Pancreas (tissue), 10 donors: ENCODE measurements at regions of chr16 and their contacts with region 1.

Region 1: DNA sequence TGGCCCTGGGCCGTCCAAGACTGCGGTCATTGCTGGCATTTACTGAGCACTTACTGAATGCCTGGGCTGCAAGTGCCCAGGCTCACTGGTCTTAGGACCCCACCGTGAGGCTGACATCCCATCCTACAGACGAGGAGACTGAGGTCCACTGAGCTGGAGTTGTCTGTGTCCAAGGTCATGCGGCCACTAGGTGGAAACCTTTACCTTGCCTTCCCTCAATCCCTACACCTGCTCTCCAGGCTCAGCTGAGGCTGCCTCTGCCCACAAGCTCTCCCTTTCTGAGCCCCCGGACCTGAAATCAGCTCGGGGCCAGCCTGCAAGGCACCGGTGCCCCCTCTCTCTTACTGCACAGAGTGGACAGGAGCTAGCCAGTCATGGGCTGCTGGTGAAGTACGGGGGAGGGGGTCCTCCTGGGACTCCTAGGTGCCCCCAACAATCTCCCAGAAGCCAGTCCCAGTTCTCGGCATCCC is 1.5 kb downstream of the CASKIN1 start:
- DNase-seq: peak in 3 of 6 donors; percentile 53 to 68 (median 67)
- ATAC-seq: peak; percentile 79 to 94 (median 90)
- H3K4me3 ChIP-seq: no peak overlapping the region
- H3K27ac ChIP-seq: no peak overlapping the region
- H3K4me1 ChIP-seq: peaks cover 5 to 7% (median 7%) of the 10 kb centered on the region in 3 donors
- H3K27me3 ChIP-seq: no peaks in the 10 kb centered on the region
- CTCF ChIP-seq: peak; percentile 17 to 49 (median 35)

Region 2: DNA sequence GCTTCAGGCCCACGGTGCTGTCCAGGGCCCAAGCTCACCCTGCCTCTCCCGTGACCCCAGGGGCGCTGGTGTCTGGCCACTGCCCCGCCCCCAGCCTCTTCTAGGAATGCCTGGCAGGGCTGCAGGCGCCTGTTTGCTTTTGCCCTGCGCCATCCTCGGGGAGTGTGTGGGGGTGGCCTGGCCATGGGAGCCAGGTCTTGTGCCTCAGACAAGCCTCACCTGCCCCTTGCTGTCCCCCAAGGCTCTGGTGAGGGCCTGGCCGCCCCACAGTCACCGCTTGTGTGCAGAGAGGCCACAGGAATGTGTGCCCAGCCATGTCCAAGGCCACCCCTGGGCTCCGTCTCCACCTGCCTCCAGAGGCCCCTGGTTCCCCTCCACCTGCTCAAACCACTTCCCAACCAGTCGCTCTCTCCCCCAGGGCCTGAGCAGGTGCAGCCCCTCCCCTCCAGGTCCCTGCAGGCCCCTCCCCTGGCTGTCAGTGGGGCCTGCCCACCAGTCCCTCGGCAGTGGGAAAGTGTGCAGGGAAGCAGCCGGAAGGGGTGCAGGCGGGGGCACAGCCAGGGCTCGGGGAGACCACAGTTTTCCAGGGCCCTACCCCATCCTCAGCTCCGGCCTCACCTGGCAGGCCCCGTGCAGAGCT is 400.5 kb before region 1 on chr16:
- intact Hi-C with region 1: no loop called
- DNase-seq: peak; percentile 33 to 87 (median 62)
- ATAC-seq: peak; percentile 51 to 76 (median 72)
- H3K4me3 ChIP-seq: peak overlapping the region in 2 of 4 donors; percentile 26 to 45
- H3K27ac ChIP-seq: peak overlapping the region; percentile 53 to 78 (median 66)
- H3K4me1 ChIP-seq: peaks cover 9 to 17% (median 16%) of the 10 kb centered on the region in 3 donors
- H3K27me3 ChIP-seq: no peaks in the 10 kb centered on the region
- CTCF ChIP-seq: no peak

Region 3: GRCh38 chr16:2251483-2252240 is 56.8 kb after region 1 on chr16 and contains the start of gene ECI1:
- intact Hi-C with region 1: loop called in 1 of 3 experiments (anchors 10 kb)
- DNase-seq: peak; percentile 96 to 99 (median 98)
- ATAC-seq: peak; percentile 96 to 99 (median 98)
- H3K4me3 ChIP-seq: peak within 1 kb of the TSS; percentile 51 to 65 (median 64)
- H3K27ac ChIP-seq: peak within 1 kb of the TSS; percentile 67 to 89 (median 82)
- H3K4me1 ChIP-seq: peaks cover 0 to 21% (median 8%) of the 10 kb centered on the region in 3 donors
- H3K27me3 ChIP-seq: no peaks in the 10 kb centered on the region
- CTCF ChIP-seq: peak; percentile 52 to 74 (median 60)
- total RNA-seq, gene ECI1: 31.9 to 64.4 (median 36.3) TPM

Region 4: DNA sequence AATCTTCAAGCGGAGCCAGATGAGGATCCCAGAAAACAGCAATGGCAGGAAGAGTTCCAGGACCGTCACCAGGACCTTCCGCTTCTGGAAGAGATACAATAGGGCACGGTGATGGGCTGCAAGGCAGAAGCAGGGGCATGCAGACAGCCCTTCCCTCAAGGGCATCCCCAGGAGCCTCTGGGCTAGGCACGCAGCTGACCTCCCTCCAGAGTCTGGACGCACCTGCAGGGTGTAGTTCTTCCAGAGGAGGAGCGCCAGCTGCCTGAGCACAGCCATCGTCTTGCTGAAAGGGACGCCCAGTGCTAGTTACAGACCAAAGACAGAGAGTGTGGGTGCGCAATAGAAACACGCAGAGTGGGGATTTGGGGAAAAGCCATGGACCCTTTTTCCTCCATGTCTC is 131.3 kb after region 1 on chr16:
- intact Hi-C with region 1: no loop called
- DNase-seq: no peak
- ATAC-seq: no peak
- H3K4me3 ChIP-seq: no peak overlapping the region
- H3K27ac ChIP-seq: no peak overlapping the region
- H3K4me1 ChIP-seq: no peaks in the 10 kb centered on the region
- H3K27me3 ChIP-seq: no peaks in the 10 kb centered on the region
- CTCF ChIP-seq: no peak